Calu3 (cell line): ENCODE measurements at regions of chr1 and their contacts with region 1.

Region 1: DNA sequence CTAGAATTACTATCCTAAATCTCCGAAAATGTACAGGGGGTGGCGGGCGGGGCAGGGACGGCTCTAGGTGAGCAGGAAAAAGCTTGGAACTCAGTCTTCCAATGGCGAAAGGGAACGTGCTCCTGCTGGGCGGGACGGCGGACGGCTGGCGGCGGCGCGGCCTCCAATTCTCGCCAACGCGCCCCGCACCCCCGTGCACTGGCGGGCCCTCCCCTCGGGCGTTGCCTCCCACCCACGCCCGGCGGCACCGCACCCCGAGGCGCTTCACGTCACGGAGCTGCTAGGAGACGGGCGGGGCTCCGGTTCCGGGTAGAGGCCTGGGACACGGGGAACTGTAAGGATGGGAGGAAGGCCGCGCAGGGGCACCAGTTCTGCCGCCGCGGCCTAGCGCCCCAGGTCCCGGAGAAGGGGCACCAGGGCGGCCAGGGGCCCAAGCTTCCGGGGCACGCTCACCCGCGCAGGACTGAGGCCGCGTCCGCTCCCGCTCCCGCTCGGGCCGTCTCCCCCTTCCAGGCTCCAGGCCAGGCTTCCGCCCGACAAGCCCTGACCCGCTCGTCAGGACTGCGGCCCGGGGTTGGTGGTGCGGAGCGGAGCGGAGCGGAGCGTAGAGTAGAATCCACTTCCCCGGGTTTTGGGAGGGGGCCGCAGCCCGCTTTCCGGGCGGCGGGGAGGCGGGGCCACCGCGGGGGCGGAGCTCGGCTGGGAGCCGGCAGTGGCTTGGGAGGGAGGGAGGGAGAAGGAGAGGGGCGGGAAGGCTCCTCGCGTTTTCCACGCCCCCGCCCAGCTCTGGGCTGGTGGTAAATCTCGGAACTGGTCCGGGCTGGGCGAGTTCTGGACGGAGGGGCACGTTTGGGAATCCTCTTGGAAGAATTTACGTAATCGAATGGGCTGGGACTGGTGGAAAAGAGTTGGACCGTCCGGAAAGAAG is at the start of gene DDX59:
- DNase-seq: peak; percentile 98
- H3K4me3 Mint-ChIP-seq: peak within 1 kb of the TSS; percentile 95
- H3K27ac Mint-ChIP-seq: peak within 1 kb of the TSS; percentile 97
- H3K4me1 Mint-ChIP-seq: peaks cover 22% of the 10 kb centered on the region
- H3K27me3 Mint-ChIP-seq: no peaks in the 10 kb centered on the region
- CTCF ChIP-seq: no peak
- total RNA-seq, gene DDX59: 15.1 and 19.3 TPM in 2 replicates

Region 2: GRCh38 chr1:200639790-200640669 is 29.5 kb before region 1 on chr1:
- CTCF ChIA-PET with region 1: interaction called, 10 read pairs
- intact Hi-C with region 1: no loop called
- DNase-seq: peak; percentile 76
- H3K4me3 Mint-ChIP-seq: peak overlapping the region; percentile 11
- H3K27ac Mint-ChIP-seq: peak overlapping the region; percentile 81
- H3K4me1 Mint-ChIP-seq: peaks cover 17% of the 10 kb centered on the region
- H3K27me3 Mint-ChIP-seq: no peaks in the 10 kb centered on the region
- CTCF ChIP-seq: no peak

Region 3: GRCh38 chr1:200739499-200740290 is 70.1 kb after region 1 on chr1:
- CTCF ChIA-PET with region 1: interaction called, 5 read pairs
- intact Hi-C with region 1: loop called (anchors 5 kb)
- DNase-seq: peak; percentile 39
- H3K4me3 Mint-ChIP-seq: peak overlapping the region; percentile 92
- H3K27ac Mint-ChIP-seq: peak overlapping the region; percentile 88
- H3K4me1 Mint-ChIP-seq: peaks cover 31% of the 10 kb centered on the region
- H3K27me3 Mint-ChIP-seq: no peaks in the 10 kb centered on the region
- CTCF ChIP-seq: no peak

Region 4: GRCh38 chr1:200907611-200908097 is 238.1 kb after region 1 on chr1:
- CTCF ChIA-PET with region 1: no interaction called
- intact Hi-C with region 1: no loop called
- DNase-seq: no peak
- H3K4me3 Mint-ChIP-seq: peak overlapping the region; percentile 7
- H3K27ac Mint-ChIP-seq: peak overlapping the region; percentile 56
- H3K4me1 Mint-ChIP-seq: peaks cover 21% of the 10 kb centered on the region
- H3K27me3 Mint-ChIP-seq: no peaks in the 10 kb centered on the region
- CTCF ChIP-seq: no peak